T-cell (primary cell): ENCODE measurements at regions of chr1 and their contacts with region 1.

Region 1: GRCh38 chr1:24415334-24415909 is at the start of gene NIPAL3:
- DNase-seq: peak; percentile 93 to 100 (median 98)
- ATAC-seq: peak; percentile 94 to 98 (median 96)
- H3K4me3 ChIP-seq: peak within 1 kb of the TSS; percentile 85 to 93
- H3K4me3 Mint-ChIP-seq: peak within 1 kb of the TSS; percentile 92 to 99 (median 93)
- H3K27ac ChIP-seq: peak within 1 kb of the TSS; percentile 56
- H3K27ac Mint-ChIP-seq: peak within 1 kb of the TSS; percentile 91 to 93
- H3K4me1 ChIP-seq: peaks cover 31 to 54% of the 10 kb centered on the region in 2 experiments
- H3K4me1 Mint-ChIP-seq: peaks cover 66 to 75% (median 72%) of the 10 kb centered on the region in 3 donors
- H3K27me3 ChIP-seq: no peaks in the 10 kb centered on the region
- H3K27me3 Mint-ChIP-seq: no peaks in the 10 kb centered on the region
- total RNA-seq, gene NIPAL3: 49.0 to 71.4 (median 59.7) TPM

Region 2: DNA sequence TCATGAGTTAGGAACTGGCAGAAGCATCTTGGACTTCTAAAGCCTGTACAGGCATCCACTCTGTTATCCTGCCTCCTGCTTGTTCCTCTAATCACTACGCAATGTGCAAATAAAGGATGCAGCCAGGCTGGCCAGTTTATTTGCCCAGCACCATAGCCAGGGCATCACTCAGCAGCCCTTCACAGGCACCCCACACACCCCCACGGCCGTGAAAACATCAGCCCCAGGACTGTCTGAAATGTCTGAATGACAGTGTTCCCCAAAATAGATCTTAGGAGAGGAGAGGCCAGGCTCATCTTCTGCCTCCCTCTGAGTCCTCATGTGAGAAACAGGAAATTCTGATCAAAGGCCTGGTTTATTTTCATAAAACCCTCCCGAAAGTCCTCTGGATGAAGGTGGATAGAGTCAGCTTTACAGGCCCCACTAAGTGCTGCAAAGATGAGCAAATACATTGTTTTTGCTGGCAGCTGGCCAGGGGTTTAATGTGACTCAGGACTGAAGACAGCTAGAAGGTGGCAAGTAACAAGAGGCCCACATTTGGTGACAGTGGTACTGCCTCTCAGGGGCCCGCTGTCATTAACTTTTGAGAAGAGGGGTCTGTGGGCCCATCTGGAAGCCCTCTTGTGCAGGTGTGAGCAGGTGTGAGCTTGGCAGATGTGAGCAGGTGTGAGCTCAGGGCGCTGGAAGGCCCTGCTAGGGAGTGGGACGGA is 63.3 kb before region 1 on chr1:
- CTCF ChIA-PET with region 1: no interaction called
- POLR2A ChIA-PET with region 1: no interaction called
- DNase-seq: peak in 1 of 35 experiments; percentile 6
- ATAC-seq: no peak
- H3K4me3 ChIP-seq: no peak overlapping the region
- H3K4me3 Mint-ChIP-seq: no peak overlapping the region
- H3K27ac ChIP-seq: no peak overlapping the region
- H3K27ac Mint-ChIP-seq: peak overlapping the region in 1 of 2 donors; percentile 67
- H3K4me1 ChIP-seq: peaks cover 0 to 3% of the 10 kb centered on the region in 2 experiments
- H3K4me1 Mint-ChIP-seq: peaks cover 14 to 24% (median 20%) of the 10 kb centered on the region in 3 donors
- H3K27me3 ChIP-seq: peaks cover 0 to 6% of the 10 kb centered on the region in 2 experiments
- H3K27me3 Mint-ChIP-seq: no peaks in the 10 kb centered on the region

Region 3: GRCh38 chr1:24486331-24487065 is 71.1 kb after region 1 on chr1:
- CTCF ChIA-PET with region 1: interaction called, 3 to 11 read pairs
- POLR2A ChIA-PET with region 1: no interaction called
- DNase-seq: peak in 21 of 35 experiments; percentile 15 to 78 (median 42)
- ATAC-seq: peak; percentile 63 to 73 (median 68)
- H3K4me3 ChIP-seq: peak overlapping the region in 1 of 2 donors; percentile 0
- H3K4me3 Mint-ChIP-seq: peak overlapping the region; percentile 37 to 70 (median 64)
- H3K27ac ChIP-seq: peak overlapping the region; percentile 71
- H3K27ac Mint-ChIP-seq: peak overlapping the region; percentile 90 to 98
- H3K4me1 ChIP-seq: peaks cover 57 to 76% of the 10 kb centered on the region in 2 experiments
- H3K4me1 Mint-ChIP-seq: peaks cover 77 to 79% (median 77%) of the 10 kb centered on the region in 3 donors
- H3K27me3 ChIP-seq: peaks cover 0 to 3% of the 10 kb centered on the region in 2 experiments
- H3K27me3 Mint-ChIP-seq: no peaks in the 10 kb centered on the region

Region 4: GRCh38 chr1:24586970-24587820 is 171.8 kb after region 1 on chr1:
- CTCF ChIA-PET with region 1: interaction called, 3 to 37 read pairs
- POLR2A ChIA-PET with region 1: no interaction called
- DNase-seq: peak in 33 of 35 experiments; percentile 12 to 88 (median 50)
- ATAC-seq: peak; percentile 96 to 99 (median 98)
- H3K4me3 ChIP-seq: no peak overlapping the region
- H3K4me3 Mint-ChIP-seq: no peak overlapping the region
- H3K27ac ChIP-seq: peak overlapping the region; percentile 43
- H3K27ac Mint-ChIP-seq: peak overlapping the region; percentile 79 to 86
- H3K4me1 ChIP-seq: no peaks in the 10 kb centered on the region
- H3K4me1 Mint-ChIP-seq: peaks cover 6 to 9% (median 8%) of the 10 kb centered on the region in 3 donors
- H3K27me3 ChIP-seq: peaks cover 0 to 17% of the 10 kb centered on the region in 2 experiments
- H3K27me3 Mint-ChIP-seq: peaks cover 0 to 7% of the 10 kb centered on the region in 2 donors